ENCODE measurements at regions of chr12 and their contacts with region 1.

Region 1: GRCh38 chr12:121668750-121669520 is 519 bp downstream of the MORN3 start:
- DNase-seq: peak; percentile 83
- ATAC-seq: peak; percentile 38
- H3K4me3 Mint-ChIP-seq: no peak overlapping the region
- H3K27ac Mint-ChIP-seq: peak overlapping the region; percentile 53; the same call in 1 of the 2 replicates
- H3K4me1 Mint-ChIP-seq: peaks cover 34% of the 10 kb centered on the region
- H3K27me3 Mint-ChIP-seq: no peaks in the 10 kb centered on the region; the same call in 1 of the 2 replicates
- CTCF ChIP-seq: no peak

Region 2: GRCh38 chr12:121483949-121484348 is 185.0 kb before region 1 on chr12:
- CTCF ChIA-PET with region 1: interaction called, 10 read pairs
- POLR2A ChIA-PET with region 1: no interaction called
- DNase-seq: peak; percentile 17
- ATAC-seq: peak; percentile 38; the same call in 1 of the 2 replicates
- H3K4me3 Mint-ChIP-seq: no peak overlapping the region
- H3K27ac Mint-ChIP-seq: peak overlapping the region; percentile 44
- H3K4me1 Mint-ChIP-seq: peaks cover 8% of the 10 kb centered on the region
- H3K27me3 Mint-ChIP-seq: no peaks in the 10 kb centered on the region
- CTCF ChIP-seq: no peak

Region 3: DNA sequence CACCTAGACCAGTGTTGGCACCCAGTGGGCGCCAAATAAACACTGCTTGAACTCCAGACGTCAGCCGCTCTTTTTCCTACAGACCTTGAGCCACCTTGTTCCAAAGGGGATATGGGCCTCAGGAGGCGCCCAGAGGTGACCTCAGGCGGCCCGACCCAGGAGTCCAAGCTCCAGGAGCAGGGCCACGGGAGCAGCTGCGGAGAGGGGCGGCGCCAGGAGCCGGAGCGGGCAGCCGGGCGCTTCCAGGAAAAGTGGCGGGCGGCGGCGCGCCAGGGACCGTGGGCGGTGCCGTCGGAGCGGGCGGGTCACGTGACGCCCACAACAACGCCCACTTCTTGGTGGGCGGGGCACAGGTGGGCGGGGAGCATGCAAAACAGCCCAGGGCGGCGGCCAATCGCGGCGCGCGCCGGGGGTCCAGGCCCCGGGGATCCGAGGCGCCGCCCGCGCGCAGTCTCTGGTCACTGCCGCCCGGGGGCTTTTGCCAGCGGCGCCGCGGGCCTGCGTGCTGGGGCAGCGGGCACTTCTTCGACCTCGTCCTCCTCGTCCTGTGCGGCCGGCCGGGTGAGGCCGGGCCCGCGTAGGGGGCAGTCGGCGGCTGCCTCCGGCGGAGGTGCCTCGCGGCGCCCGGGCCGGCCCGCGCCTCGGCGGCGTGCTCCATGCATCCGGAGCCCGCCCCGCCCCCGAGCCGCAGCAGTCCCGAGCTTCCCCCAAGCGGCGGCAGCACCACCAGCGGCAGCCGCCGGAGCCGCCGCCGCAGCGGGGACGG is 42.7 kb before region 1 on chr12 and contains the start of gene ORAI1:
- CTCF ChIA-PET with region 1: interaction called, 59 read pairs
- POLR2A ChIA-PET with region 1: interaction called, 7 read pairs
- DNase-seq: peak; percentile 96
- ATAC-seq: peak; percentile 72
- H3K4me3 Mint-ChIP-seq: peak within 1 kb of the TSS; percentile 81
- H3K27ac Mint-ChIP-seq: peak within 1 kb of the TSS; percentile 80
- H3K4me1 Mint-ChIP-seq: peaks cover 49% of the 10 kb centered on the region
- H3K27me3 Mint-ChIP-seq: no peaks in the 10 kb centered on the region
- CTCF ChIP-seq: no peak
- total RNA-seq, gene ORAI1: 27.7 to 28.9 TPM (median 28.6 TPM) in 3 replicates

Region 4: GRCh38 chr12:121649819-121650353 is 19.0 kb before region 1 on chr12:
- CTCF ChIA-PET with region 1: interaction called, 10 read pairs
- POLR2A ChIA-PET with region 1: no interaction called
- DNase-seq: no peak
- ATAC-seq: no peak
- H3K4me3 Mint-ChIP-seq: no peak overlapping the region
- H3K27ac Mint-ChIP-seq: peak overlapping the region; percentile 85
- H3K4me1 Mint-ChIP-seq: peaks cover 10% of the 10 kb centered on the region
- H3K27me3 Mint-ChIP-seq: no peaks in the 10 kb centered on the region
- CTCF ChIP-seq: no peak

Region 5: GRCh38 chr12:121678716-121679580 is 10.0 kb after region 1 on chr12:
- CTCF ChIA-PET with region 1: interaction called, 14 read pairs
- POLR2A ChIA-PET with region 1: interaction called, 5 read pairs
- DNase-seq: no peak
- ATAC-seq: peak; percentile 45
- H3K4me3 Mint-ChIP-seq: no peak overlapping the region
- H3K27ac Mint-ChIP-seq: peak overlapping the region; percentile 69; the same call in 1 of the 2 replicates
- H3K4me1 Mint-ChIP-seq: peaks cover 17% of the 10 kb centered on the region
- H3K27me3 Mint-ChIP-seq: no peaks in the 10 kb centered on the region
- CTCF ChIP-seq: no peak